Activated CD4-positive, alpha-beta memory T cell treated with anti-CD3 and anti-CD28 coated beads, Interleukin-2, amount 10 ng/mL, durations not matched to agents 7 days and 5 days (primary cell): ENCODE measurements at regions of chr15 and their contacts with region 1.

Region 1: DNA sequence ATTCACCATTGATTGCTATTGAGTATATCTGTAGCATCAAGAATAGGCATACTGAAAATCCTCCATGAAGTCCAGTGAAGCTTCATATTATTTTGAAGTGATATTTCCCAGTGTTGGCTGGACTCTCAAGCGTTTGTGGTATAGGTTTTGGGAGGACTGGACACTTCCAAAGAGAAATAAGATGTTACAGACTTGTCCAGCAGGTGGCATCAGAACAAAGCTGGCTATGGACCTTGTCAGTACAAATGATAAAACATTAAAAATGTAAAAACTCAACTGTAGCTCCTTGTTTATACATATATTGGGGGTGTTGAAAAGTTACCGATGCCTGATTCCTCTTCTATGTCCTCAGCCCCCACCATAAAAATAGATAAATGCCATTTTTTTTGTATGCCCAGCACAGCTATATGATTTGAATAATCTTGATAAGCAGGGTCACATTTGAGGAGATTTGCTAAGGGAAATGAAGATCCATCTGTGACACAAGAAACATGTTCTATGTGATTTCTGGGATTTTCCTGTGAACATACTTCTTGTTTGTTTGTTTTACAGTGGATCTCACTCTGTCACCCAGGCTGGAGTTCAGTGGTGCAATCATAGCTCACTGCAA is 54.5 kb upstream of the GOLGA6B start:
- DNase-seq: peak; percentile 26
- H3K4me3 Mint-ChIP-seq: no peak overlapping the region
- H3K27ac Mint-ChIP-seq: no peak overlapping the region
- H3K4me1 Mint-ChIP-seq: no peaks in the 10 kb centered on the region
- H3K27me3 Mint-ChIP-seq: no peaks in the 10 kb centered on the region

Region 2: DNA sequence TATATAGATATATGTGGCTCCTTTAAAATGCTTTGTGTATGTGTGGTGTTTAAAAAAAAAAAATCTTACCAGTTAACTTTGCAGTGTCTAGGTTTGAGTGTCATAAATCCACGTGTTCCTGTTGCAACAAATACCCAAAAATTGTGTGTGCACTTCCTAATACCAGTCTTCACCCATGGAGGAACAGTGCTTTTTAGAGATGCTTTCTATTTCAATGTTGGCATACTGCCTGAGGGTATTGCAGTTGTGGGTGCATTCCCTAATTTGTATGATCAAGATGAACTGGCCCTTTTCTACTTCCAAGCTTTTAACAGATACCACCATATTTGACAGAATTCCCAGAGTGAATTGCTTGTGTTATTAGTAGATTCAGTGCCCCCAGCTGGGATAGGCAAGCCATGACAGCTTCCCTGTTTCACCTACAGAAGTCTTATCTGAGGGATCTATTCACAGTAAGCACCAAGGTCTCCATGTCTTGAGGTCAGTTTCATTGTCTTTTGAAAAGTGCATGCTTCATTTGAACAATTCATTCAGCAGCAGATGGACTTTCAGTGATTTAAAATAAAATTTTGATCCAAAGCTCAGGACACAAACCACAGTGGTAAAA is 14.4 kb before region 1 on chr15:
- CTCF ChIA-PET with region 1: interaction called, 11 read pairs
- POLR2A ChIA-PET with region 1: no interaction called
- DNase-seq: no peak
- H3K4me3 Mint-ChIP-seq: no peak overlapping the region
- H3K27ac Mint-ChIP-seq: no peak overlapping the region
- H3K4me1 Mint-ChIP-seq: no peaks in the 10 kb centered on the region
- H3K27me3 Mint-ChIP-seq: no peaks in the 10 kb centered on the region

Region 3: DNA sequence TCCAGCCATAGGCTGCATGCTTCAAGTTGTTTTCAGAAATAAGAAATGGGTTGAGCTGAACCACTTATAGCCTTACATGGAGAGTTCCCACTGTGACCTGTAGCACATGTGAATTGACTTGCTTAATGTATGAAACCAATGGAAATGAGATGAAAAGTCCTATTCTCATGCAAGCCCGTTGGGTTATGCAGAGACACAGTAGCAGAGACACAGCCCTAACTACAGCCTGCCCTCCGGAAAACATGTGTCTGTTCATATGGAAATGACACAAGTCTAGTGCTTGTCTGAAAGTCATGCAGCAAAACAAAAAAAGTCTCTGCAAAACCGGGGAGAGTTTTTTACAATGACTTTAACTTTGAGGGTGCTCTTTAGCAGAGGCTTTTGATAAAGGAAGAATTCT is 71.6 kb after region 1 on chr15:
- CTCF ChIA-PET with region 1: interaction called, 17 read pairs
- POLR2A ChIA-PET with region 1: no interaction called
- DNase-seq: no peak
- H3K4me3 Mint-ChIP-seq: no peak overlapping the region
- H3K27ac Mint-ChIP-seq: no peak overlapping the region
- H3K4me1 Mint-ChIP-seq: peaks cover 10% of the 10 kb centered on the region
- H3K27me3 Mint-ChIP-seq: peaks cover 16% of the 10 kb centered on the region